ENCODE measurements at regions of chr7 and their contacts with region 1.

Region 1: GRCh38 chr7:47520406-47520805 is 61.5 kb downstream of the TNS3 start:
- DNase-seq: peak; percentile 76 to 83
- ATAC-seq: peak; percentile 74
- H3K4me3 ChIP-seq: no peak overlapping the region
- H3K27ac ChIP-seq: peak overlapping the region; percentile 4 to 38
- H3K4me1 ChIP-seq: peaks cover 0 to 2% of the 10 kb centered on the region in 2 donors
- H3K27me3 ChIP-seq: no peaks in the 10 kb centered on the region

Region 2: GRCh38 chr7:47557169-47557985 is 37.0 kb after region 1 on chr7:
- intact Hi-C with region 1: loop called in 1 of 2 experiments (anchors 5 kb)
- DNase-seq: no peak
- ATAC-seq: peak; percentile 59
- H3K4me3 ChIP-seq: no peak overlapping the region
- H3K27ac ChIP-seq: peak overlapping the region in 1 of 2 donors; percentile 43
- H3K4me1 ChIP-seq: peaks cover 0 to 3% of the 10 kb centered on the region in 2 donors
- H3K27me3 ChIP-seq: no peaks in the 10 kb centered on the region